Right ventricle myocardium superior (tissue), 1 donor: ENCODE measurements at regions of chr18 and their contacts with region 1.

Region 1: DNA sequence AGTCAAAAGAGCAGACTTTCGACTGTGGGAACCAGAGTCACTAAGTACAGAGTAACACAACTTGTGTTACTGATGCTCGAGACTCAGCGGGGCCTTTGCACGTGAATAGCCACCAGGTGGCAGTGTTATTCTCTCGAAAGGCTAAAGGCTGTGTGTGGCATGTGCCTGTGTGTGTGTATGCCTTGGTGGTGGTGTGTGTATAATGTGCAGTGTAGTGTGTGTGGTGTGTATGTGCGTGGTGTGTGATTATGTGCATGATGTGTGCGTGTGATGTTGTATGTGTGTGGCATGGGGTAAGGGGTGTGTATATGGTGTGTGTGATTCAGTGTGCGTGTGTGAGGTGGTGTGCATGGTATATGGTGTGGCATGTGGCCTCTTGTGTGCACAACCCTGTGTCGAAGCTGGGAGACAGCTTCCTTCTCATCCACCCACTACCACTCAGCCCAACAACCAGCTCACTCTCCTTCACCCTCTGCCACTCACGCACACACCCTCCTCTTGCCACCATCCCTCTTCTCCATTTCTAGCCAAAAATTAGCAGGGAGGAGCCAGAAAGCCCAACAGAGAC is 83.0 kb upstream of the ZNF532 start:
- DNase-seq: peak; percentile 72
- ATAC-seq: peak; percentile 96

Region 2: DNA sequence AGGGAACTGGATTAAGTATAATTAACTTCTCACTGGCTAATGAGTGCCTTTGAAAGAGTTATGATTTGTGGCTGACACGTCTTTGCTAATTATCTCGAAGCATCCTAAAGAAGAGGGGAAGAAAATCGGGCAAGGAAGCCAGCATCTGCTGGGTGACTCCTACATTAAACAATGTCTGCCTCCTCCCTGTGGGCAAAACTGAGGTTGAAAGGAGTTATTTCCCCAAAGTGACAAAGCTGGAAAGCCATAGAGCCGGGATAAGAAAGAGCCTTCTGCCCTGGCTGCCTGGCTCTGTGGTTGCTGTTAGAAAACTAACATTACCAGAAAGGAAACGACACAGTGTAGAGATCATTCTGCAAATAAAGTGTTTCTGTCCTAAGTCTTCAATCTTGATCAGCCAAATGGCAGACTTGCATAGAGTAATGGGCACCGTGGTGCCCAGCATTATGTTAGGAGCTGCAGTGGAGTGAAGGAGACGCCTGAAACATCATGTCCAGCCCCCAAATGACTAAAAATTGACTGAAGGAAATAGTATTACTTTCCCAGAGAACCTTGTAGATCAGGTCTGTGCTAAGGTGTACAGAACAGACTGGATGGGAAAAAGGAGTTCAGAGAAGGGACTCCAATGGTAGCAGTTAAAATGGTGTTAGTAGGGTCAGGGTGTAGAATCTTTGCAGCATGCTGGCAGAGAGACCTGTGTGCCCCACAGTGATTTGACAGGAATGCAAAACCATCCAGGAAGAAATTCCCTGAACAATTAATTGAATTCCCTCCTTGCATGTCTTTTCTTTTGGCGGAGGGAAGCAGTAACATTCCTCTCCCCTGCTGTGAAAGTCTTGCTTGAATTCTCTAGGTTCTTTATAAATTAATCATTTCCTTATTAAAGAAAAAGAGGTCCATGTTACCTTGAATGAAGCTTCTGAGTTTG is 197.2 kb before region 1 on chr18:
- intact Hi-C with region 1: no loop called
- DNase-seq: no peak
- ATAC-seq: no peak

Region 3: DNA sequence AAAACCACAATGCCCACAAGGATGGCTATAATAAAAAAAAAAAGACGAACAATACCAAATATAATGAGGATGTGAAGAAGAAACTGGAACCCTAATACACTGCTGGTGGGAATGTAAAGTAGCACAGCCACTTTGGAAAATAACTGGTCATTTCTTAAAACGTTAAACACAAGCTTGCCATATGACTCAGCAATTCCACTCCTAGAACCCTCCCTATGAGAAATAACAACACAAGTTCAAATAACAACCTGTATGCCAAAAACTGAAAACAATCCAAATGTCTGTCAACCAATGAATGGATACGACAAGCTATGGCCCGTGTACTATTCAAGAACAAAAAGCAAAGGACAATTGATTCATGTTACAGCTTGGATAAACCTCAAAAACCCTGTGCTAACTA is 145.8 kb before region 1 on chr18:
- intact Hi-C with region 1: no loop called
- DNase-seq: no peak
- ATAC-seq: no peak

Region 4: GRCh38 chr18:58831606-58832005 is 49.9 kb after region 1 on chr18:
- intact Hi-C with region 1: no loop called
- DNase-seq: no peak
- ATAC-seq: no peak

Region 5: DNA sequence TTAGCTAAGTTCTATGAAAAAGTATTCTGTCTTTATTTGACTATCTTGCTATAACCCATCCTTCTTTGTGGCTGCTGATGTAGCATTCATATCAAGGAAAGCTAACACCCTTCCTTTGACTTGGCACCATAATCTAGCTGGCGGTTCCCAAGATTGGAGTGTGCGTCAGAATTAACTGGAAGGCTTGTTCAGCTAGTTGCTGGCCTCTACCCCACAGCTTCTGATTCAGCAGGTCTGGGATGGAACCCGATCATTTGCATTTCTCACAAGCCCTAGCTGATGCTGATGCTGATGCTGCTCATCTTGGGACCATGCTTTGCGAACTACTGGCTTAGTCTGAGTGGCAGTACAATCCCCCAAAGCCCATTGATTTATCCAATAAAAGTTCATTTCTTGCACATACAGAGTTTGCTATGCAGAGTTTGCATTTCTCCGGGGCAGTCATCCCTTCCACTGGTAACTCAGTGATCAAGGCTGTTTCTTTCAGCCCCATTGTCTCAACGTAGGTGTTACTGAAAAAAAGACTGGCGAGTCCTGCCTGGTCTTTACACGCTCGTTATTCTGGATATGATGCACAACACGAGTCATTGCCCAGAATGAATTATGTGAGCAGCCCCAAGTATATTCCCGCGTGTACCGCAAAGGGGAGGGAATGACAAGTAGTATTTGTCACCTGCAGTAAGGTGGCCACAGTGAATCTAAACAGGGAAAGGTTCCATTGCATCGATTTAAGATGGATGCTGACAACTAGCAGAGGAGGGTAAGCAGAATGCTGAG is 179.4 kb after region 1 on chr18:
- intact Hi-C with region 1: loop called (anchors 10 kb)
- DNase-seq: no peak
- ATAC-seq: peak; percentile 72

Region 6: DNA sequence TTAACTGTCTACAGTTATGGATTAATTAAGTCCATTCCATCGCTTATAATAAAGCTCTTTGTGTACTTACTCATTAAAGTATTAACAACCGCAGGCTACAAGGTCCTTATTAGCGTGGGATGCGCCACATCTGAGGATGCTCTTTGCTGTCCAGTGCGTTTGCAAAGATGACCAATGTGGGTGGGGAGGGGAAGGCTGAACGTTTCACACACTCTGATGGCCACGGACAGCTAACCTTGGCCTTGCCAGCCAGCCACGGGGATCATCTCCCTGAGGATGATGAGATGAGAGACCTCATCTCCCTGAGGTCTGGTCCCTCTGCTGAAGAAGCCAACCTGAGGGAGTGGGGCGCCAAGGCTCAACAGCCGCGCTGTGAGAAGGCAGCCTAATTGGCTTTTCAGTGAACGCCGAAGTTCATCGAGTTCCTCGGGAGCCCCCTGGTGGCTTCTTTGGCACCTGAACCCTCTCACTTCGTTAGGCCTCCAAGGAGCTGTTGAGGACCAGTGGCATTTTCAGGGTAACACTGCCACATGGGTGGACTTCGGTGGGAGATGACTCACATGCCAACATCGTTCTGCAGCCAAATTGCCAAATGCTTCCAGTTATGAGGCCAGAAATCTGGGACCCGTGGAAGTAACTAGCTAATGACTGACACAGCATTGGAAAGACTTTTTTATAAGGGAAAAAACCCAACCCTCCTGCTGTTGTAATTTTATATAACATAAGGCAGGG is 288.6 kb after region 1 on chr18:
- intact Hi-C with region 1: loop called (anchors 2 kb)
- DNase-seq: peak; percentile 90
- ATAC-seq: peak; percentile 88